ENCODE measurements at regions of chr20 and their contacts with region 1.

Region 1: GRCh38 chr20:15155848-15156401 is 818.5 kb upstream of the FLRT3 start:
- DNase-seq: no peak
- H3K4me3 Mint-ChIP-seq: no peak overlapping the region
- H3K27ac Mint-ChIP-seq: no peak overlapping the region
- H3K4me1 Mint-ChIP-seq: no peaks in the 10 kb centered on the region
- H3K27me3 Mint-ChIP-seq: no peaks in the 10 kb centered on the region

Region 2: GRCh38 chr20:14855171-14855570 is 300.8 kb before region 1 on chr20:
- intact Hi-C with region 1: loop called (anchors 5 kb)
- DNase-seq: no peak
- H3K4me3 Mint-ChIP-seq: no peak overlapping the region
- H3K27ac Mint-ChIP-seq: no peak overlapping the region
- H3K4me1 Mint-ChIP-seq: no peaks in the 10 kb centered on the region
- H3K27me3 Mint-ChIP-seq: no peaks in the 10 kb centered on the region

Region 3: GRCh38 chr20:15515691-15516090 is 359.8 kb after region 1 on chr20:
- intact Hi-C with region 1: no loop called
- DNase-seq: no peak
- H3K4me3 Mint-ChIP-seq: no peak overlapping the region
- H3K27ac Mint-ChIP-seq: no peak overlapping the region
- H3K4me1 Mint-ChIP-seq: no peaks in the 10 kb centered on the region
- H3K27me3 Mint-ChIP-seq: no peaks in the 10 kb centered on the region